Thyroid gland (tissue), 4 donors: ENCODE measurements at regions of chr14 and their contacts with region 1.

Region 1: GRCh38 chr14:94036313-94037050 is 10.3 kb downstream of the OTUB2 start:
- DNase-seq: peak; percentile 66 to 73
- H3K4me3 ChIP-seq: no peak overlapping the region
- H3K27ac ChIP-seq: no peak overlapping the region
- H3K4me1 ChIP-seq: peaks cover 0 to under 1% of the 10 kb centered on the region in 2 donors
- H3K27me3 ChIP-seq: no peaks in the 10 kb centered on the region
- CTCF ChIP-seq: peak; percentile 56 to 79 (median 70)
- POLR2A ChIP-seq: no peak

Region 2: GRCh38 chr14:94136575-94137331 is 100.3 kb after region 1 on chr14:
- intact Hi-C with region 1: loop called (anchors 5 kb)
- DNase-seq: peak; percentile 86 to 88
- H3K4me3 ChIP-seq: no peak overlapping the region
- H3K27ac ChIP-seq: no peak overlapping the region
- H3K4me1 ChIP-seq: no peaks in the 10 kb centered on the region
- H3K27me3 ChIP-seq: no peaks in the 10 kb centered on the region
- CTCF ChIP-seq: peak; percentile 85 to 97 (median 92)
- POLR2A ChIP-seq: no peak

Region 3: GRCh38 chr14:94180655-94181271 is 144.3 kb after region 1 on chr14:
- intact Hi-C with region 1: loop called (anchors 5 kb)
- DNase-seq: peak in 1 of 2 donors; percentile 9
- H3K4me3 ChIP-seq: no peak overlapping the region
- H3K27ac ChIP-seq: no peak overlapping the region
- H3K4me1 ChIP-seq: no peaks in the 10 kb centered on the region
- H3K27me3 ChIP-seq: no peaks in the 10 kb centered on the region
- CTCF ChIP-seq: peak; percentile 23 to 70 (median 48)
- POLR2A ChIP-seq: no peak